ENCODE measurements at regions of chr10 and their contacts with region 1.

Region 1: DNA sequence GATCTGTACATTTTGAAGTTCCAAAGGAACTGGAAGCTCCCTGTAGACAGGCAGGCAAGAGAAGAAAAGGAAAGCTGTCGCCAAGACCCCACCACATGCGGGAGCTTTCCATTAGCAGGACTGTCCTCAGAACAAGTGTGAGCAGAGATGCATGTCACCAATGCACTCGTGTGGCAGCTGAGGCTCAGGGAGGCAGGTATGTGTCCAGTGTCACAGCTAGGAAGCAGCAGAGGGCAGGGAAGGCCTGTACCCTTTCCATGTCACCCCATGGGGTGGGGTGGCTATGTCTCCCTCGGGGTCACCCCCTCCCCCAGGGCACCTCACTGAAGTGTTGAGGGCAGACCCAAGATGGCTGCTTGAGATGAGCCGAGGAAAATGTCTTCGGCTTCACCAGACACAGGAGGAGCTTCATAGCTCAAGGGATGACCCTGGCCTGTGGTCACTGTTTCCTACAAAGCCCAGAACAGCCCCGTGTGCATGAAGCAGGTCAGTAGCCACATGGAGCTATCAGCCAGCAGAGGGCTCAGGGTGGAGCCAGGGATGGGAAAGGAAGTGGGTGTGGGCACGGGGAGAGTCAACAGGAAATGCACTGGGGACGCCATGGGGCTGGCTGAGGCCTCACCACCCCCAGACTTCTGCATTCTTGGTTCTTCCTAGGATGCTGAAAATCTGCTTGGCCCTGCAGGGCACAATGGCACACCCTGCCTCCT is 96.6 kb downstream of the FAM53B start:
- DNase-seq: peak; percentile 91
- ATAC-seq: peak; percentile 72
- H3K4me3 Mint-ChIP-seq: peak overlapping the region; percentile 54
- H3K27ac Mint-ChIP-seq: peak overlapping the region; percentile 92
- H3K4me1 Mint-ChIP-seq: peaks cover 81% of the 10 kb centered on the region
- H3K27me3 Mint-ChIP-seq: no peaks in the 10 kb centered on the region

Region 2: GRCh38 chr10:124619195-124619594 is 28.4 kb before region 1 on chr10:
- CTCF ChIA-PET with region 1: no interaction called
- DNase-seq: no peak
- ATAC-seq: no peak
- H3K4me3 Mint-ChIP-seq: no peak overlapping the region
- H3K27ac Mint-ChIP-seq: no peak overlapping the region
- H3K4me1 Mint-ChIP-seq: peaks cover 38% of the 10 kb centered on the region
- H3K27me3 Mint-ChIP-seq: no peaks in the 10 kb centered on the region

Region 3: DNA sequence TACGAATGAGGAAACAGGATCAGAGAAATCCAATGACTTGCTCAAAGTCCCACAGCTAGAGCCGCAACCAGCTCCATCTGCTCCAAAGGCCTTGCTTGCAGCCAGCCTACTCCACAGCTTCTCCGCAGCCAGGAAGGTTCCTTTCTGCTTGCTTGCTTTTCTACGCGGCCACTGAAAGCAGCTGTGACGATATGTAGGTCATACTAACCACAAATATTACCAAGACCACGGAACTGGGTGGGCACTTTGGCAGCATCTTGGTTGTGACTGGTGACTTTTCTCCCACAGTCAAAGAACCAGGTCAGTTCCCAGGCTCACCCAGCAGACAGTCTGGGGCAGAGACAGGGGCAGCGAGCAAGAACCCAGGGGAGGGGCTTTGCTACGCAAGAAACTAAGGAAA is 10.2 kb after region 1 on chr10:
- CTCF ChIA-PET with region 1: interaction called, 21 read pairs
- DNase-seq: peak; percentile 63
- ATAC-seq: peak; percentile 40
- H3K4me3 Mint-ChIP-seq: peak overlapping the region; percentile 10
- H3K27ac Mint-ChIP-seq: peak overlapping the region; percentile 72
- H3K4me1 Mint-ChIP-seq: peaks cover 62% of the 10 kb centered on the region
- H3K27me3 Mint-ChIP-seq: no peaks in the 10 kb centered on the region

Region 4: GRCh38 chr10:124677749-124678556 is 30.4 kb after region 1 on chr10:
- CTCF ChIA-PET with region 1: interaction called, 30 read pairs
- DNase-seq: no peak
- ATAC-seq: peak; percentile 28
- H3K4me3 Mint-ChIP-seq: no peak overlapping the region
- H3K27ac Mint-ChIP-seq: peak overlapping the region; percentile 89
- H3K4me1 Mint-ChIP-seq: peaks cover 57% of the 10 kb centered on the region
- H3K27me3 Mint-ChIP-seq: no peaks in the 10 kb centered on the region

Region 5: DNA sequence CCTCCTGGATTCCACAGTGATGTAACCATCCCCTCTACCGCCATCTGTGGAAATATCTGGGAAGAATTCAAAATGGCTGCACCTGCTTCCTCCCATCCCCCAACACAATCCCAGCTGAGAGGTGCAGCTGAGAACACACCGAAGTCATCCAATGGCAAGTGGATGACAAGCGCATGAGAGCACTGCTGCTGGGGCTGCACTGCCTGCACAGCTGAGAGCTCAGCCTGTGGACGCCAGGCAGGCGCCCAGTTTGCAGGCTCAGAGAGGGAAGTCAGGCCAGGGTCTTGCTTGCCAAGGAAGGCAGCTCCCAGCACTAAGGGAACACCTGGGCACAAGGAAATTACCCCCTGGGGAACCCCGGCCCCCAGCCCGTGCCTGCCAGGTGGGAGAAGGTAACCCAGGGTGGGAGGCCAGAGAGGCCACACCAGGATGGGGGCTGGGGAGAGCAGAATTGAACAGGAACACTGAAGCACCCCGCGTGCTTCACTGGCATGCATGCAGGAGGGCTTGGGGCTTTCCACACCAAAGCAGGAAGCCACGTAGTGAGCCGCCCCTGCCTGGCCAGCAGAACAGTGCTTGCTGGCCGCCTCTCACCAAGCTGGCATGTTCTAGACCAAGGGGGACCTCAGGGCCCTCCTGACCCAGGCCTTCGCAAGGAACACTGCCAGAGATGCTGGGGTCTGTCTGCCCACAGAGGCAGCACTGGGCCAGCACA is 50.4 kb after region 1 on chr10:
- CTCF ChIA-PET with region 1: interaction called, 30 read pairs
- DNase-seq: peak; percentile 71
- ATAC-seq: peak; percentile 31
- H3K4me3 Mint-ChIP-seq: no peak overlapping the region
- H3K27ac Mint-ChIP-seq: peak overlapping the region; percentile 98
- H3K4me1 Mint-ChIP-seq: peaks cover 98% of the 10 kb centered on the region
- H3K27me3 Mint-ChIP-seq: no peaks in the 10 kb centered on the region

Measured in activated CD8-positive, alpha-beta memory T cell treated with anti-CD3 and anti-CD28 coated beads, Interleukin-2, amount 10 ng/mL, durations not matched to agents 7 days and 5 days (primary cell).